ENCODE measurements at regions of chr16 and their contacts with region 1.

Region 1: DNA sequence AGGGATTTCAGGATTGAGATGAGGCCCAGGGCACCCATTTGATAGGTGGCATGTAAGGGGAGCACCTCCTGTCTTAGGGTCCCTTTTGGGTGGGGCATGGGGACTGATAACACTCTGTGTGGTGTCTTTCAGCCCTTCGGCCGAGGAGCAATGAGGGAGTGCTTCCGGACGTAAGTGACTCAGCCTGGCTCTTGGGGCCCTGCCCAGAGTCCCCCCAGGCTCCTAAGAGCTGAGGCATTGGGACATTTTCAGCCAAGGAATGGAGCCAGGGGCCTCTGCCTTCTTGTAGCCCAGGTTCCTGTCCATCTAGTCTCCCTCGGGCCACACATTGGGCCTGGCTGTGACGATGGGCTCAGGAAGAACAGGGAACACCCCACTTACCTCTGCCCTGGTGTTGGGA is 44.4 kb downstream of the EEF2K start:
- DNase-seq: peak; percentile 62 to 64
- ATAC-seq: peak in 2 of 4 donors; percentile 26 to 31
- H3K4me3 ChIP-seq: no peak overlapping the region
- H3K27ac ChIP-seq: no peak overlapping the region
- H3K4me1 ChIP-seq: no peaks in the 10 kb centered on the region
- H3K27me3 ChIP-seq: no peaks in the 10 kb centered on the region
- CTCF ChIP-seq: no peak

Region 2: DNA sequence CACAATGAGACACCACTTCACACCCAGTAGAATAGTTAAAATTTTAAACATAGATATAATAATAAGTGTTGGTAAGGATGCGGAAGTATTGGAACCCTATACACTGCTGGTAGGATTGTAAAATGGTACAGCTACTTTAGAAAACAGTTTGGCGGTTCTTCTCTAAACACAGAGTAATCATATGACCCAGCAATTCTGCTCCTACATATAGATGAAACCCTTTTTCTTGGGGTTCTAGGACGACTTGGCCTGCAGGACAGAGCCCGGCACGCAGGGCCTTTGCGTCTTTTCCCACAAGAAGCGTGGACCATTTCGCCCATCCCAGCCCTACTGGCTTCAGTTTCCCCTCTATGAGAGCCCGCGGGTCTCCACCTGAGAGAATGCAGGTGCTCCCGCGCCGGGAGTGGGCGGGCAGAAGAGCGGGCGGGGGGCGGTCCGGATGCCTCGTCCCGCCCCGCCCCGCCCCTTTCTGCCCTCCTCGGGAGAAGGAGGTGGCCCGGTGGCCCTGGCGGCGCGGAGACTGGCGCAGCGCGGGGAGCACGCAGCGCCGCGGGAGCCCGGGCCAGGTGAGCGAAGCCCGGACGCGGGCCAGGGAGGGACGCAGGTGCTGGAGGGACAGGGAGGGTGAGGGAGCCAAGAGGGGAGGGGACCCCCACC is 88.4 kb before region 1 on chr16 and contains the start of gene SDR42E2:
- intact Hi-C with region 1: no loop called
- DNase-seq: no peak
- ATAC-seq: no peak
- H3K4me3 ChIP-seq: peak within 1 kb of the TSS; percentile 42
- H3K27ac ChIP-seq: no peak within 1 kb of the TSS
- H3K4me1 ChIP-seq: no peaks in the 10 kb centered on the region
- H3K27me3 ChIP-seq: peaks cover 0 to 25% (median 6%) of the 10 kb centered on the region in 3 donors
- CTCF ChIP-seq: no peak
- total RNA-seq, gene SDR42E2: 0.08 TPM in 1 of 4 donors, not detected in the others

Region 3: GRCh38 chr16:22284637-22285036 is 34.1 kb after region 1 on chr16:
- intact Hi-C with region 1: loop called in 1 of 2 experiments (anchors 5 kb)
- DNase-seq: peak in 1 of 2 donors; percentile 18
- ATAC-seq: no peak
- H3K4me3 ChIP-seq: no peak overlapping the region
- H3K27ac ChIP-seq: no peak overlapping the region
- H3K4me1 ChIP-seq: no peaks in the 10 kb centered on the region
- H3K27me3 ChIP-seq: no peaks in the 10 kb centered on the region
- CTCF ChIP-seq: no peak

Measured in psoas muscle (tissue), 8 donors.